ENCODE measurements at regions of chr12 and their contacts with region 1.

Region 1: DNA sequence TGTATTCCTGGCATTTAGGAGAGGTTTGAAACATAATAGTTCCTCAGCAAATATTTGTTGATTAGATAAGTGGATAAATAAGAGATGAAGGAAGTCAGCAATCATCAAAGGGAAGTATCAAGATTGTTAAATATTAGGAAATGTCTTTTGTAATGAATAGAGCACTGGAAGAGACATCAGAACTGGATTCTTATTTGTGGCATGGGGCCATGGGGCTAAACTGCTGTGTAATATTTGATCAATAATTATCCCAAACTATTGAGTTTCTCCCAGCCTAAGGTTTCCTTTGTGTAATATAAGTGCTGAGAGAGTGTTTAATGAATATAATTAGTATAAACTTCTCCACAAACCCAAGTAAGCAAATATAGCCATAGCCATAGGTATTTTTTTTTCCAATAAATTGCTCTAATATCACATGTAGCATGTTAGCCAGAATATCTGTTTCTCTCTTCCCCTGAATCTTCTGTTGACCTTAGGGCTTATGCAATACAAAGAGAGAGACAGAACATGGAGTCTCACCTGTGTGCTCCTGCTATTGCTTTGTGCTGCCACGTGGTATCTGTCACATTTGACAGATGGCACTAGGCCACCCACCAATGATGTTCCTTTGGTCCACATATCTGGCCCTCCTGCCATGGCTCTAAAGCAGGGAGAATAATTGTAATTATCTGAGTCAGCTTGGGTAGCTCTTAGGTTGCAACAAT is 658.7 kb downstream of the SOX5 start:
- DNase-seq: no peak
- ATAC-seq: no peak
- H3K4me3 ChIP-seq: no peak overlapping the region
- H3K27ac ChIP-seq: no peak overlapping the region
- H3K4me1 ChIP-seq: peaks cover 0 to 14% of the 10 kb centered on the region in 2 donors
- H3K27me3 ChIP-seq: no peaks in the 10 kb centered on the region

Region 2: GRCh38 chr12:23339783-23340182 is 49.0 kb after region 1 on chr12:
- intact Hi-C with region 1: loop called in 1 of 2 experiments (anchors 10 kb)
- DNase-seq: no peak
- ATAC-seq: no peak
- H3K4me3 ChIP-seq: no peak overlapping the region
- H3K27ac ChIP-seq: no peak overlapping the region
- H3K4me1 ChIP-seq: no peaks in the 10 kb centered on the region
- H3K27me3 ChIP-seq: no peaks in the 10 kb centered on the region

Region 3: DNA sequence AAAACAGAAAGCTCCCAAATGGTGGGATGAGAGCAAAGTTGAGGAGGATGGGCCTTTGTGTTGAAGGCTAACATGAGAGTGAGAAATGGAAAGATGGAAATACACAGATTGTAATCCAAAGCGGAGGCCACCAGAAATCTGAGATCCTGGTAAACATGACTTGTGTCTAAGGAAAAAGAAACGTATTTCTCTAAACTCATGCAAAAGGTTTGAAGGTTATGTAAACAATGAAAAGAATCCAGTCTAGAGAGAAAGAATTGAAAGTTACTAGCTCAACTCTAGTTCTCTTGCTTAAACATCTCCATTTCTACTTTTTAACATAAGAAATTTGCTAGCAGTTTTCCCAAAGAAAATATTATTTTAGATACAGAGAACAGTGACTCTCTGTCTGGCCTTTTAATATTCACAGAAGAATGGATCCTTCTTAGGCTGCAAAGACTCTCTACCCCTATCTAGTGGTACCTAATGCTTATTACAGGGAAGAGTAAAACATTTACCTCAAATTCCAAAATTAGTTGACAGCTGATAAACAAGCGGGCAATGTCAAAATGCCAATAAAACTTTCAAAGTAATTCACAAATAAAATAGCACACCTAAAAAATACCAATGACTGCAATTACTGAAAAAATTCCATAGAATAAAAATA is 734.5 kb after region 1 on chr12:
- intact Hi-C with region 1: loop called in 1 of 2 experiments (anchors 5 kb)
- DNase-seq: no peak
- ATAC-seq: no peak
- H3K4me3 ChIP-seq: no peak overlapping the region
- H3K27ac ChIP-seq: peak overlapping the region in 1 of 2 donors; percentile 28
- H3K4me1 ChIP-seq: no peaks in the 10 kb centered on the region
- H3K27me3 ChIP-seq: no peaks in the 10 kb centered on the region